ENCODE measurements at regions of chr18 and their contacts with region 1.

Region 1: DNA sequence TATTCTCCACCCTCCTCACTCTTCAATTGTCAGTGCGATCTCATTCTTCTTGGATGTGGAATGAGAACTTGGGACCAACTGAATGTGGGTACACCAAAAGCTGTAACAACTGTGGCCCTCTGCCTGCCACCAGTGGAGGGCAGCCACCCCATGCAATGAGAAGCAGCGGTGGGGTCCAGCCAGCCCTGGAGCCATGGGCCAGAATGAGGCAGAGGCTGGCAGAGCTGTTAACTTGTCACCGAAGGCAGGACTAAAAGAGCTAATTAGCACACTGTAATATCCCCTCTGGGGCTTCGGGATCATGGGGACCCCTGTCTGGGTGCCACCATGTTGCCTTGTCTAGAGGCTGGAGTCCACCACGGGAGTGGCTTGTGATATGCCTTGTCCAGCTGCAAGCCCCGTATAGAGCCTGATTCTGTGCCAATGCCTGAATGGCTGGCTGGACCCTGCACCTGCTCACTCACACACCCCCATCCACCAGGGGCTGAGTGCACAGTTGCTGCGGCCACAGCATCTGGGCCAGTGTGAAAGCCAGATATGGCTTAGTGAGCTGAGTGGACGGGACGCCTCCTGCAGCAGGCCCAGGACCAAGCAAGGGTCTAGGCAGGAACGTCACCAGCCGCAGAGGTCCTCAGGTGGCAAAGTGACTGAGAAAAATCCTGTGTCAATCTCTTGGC is 680.5 kb downstream of the DSC3 start:
- DNase-seq: no peak
- H3K4me3 ChIP-seq: no peak overlapping the region
- H3K27ac ChIP-seq: no peak overlapping the region
- H3K4me1 ChIP-seq: no peaks in the 10 kb centered on the region
- H3K27me3 ChIP-seq: no peaks in the 10 kb centered on the region
- CTCF ChIP-seq: no peak
- EP300 ChIP-seq: no peak
- POLR2A ChIP-seq: no peak

Region 2: DNA sequence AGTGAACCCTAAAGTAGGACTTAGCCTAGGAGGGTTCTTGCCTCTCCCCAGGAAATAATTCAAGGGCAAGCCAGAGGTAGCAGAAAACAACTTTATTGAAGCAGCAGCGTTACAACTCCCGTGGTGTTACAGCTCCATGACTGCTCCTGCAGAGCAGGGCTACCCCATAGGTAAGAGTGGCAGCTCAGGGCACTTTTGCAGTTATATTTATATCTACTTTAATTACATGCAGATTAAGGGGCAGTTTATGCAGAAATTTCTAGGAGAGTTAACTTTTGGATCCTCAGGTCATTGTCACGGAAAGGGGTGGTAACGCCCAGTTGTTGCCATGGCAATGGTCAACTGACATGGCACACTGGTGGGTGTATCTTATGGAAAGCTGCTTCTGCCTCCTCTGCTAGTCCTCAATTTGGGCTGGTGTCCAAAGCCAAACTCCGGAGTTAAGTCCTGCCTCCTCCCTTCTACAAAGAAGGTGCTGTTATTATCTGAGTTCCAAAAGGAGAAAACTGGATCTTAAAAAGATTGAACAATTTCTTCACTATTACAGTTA is 732.4 kb before region 1 on chr18:
- in situ Hi-C with region 1: no loop called
- intact Hi-C with region 1: loop called (anchors 10 kb)
- DNase-seq: no peak
- H3K4me3 ChIP-seq: no peak overlapping the region
- H3K27ac ChIP-seq: no peak overlapping the region
- H3K4me1 ChIP-seq: no peaks in the 10 kb centered on the region
- H3K27me3 ChIP-seq: no peaks in the 10 kb centered on the region
- CTCF ChIP-seq: no peak
- EP300 ChIP-seq: no peak
- POLR2A ChIP-seq: no peak

Region 3: GRCh38 chr18:30328839-30329238 is 33.2 kb before region 1 on chr18:
- in situ Hi-C with region 1: no loop called
- intact Hi-C with region 1: no loop called
- DNase-seq: no peak
- H3K4me3 ChIP-seq: no peak overlapping the region
- H3K27ac ChIP-seq: no peak overlapping the region
- H3K4me1 ChIP-seq: no peaks in the 10 kb centered on the region
- H3K27me3 ChIP-seq: no peaks in the 10 kb centered on the region
- CTCF ChIP-seq: no peak
- EP300 ChIP-seq: no peak
- POLR2A ChIP-seq: no peak

Measured in transverse colon (tissue), 4 donors.